Gastrocnemius medialis (tissue), 4 donors: ENCODE measurements at regions of chr14 and their contacts with region 1.

Region 1: GRCh38 chr14:75126679-75127473 is at the start of gene NEK9:
- DNase-seq: peak; percentile 86 to 90
- ATAC-seq: peak; percentile 95 to 98
- H3K4me3 ChIP-seq: peak within 1 kb of the TSS; percentile 78 to 96 (median 86)
- H3K27ac ChIP-seq: peak within 1 kb of the TSS; percentile 93 to 98 (median 96)
- H3K4me1 ChIP-seq: peaks cover 36 to 40% of the 10 kb centered on the region in 2 donors
- H3K27me3 ChIP-seq: no peaks in the 10 kb centered on the region
- CTCF ChIP-seq: no peak
- POLR2A ChIP-seq: peak; percentile 87 to 90
- total RNA-seq, gene NEK9: 36.3 to 93.2 (median 42.6) TPM

Region 2: GRCh38 chr14:75487155-75487671 is 360.3 kb after region 1 on chr14:
- in situ Hi-C with region 1: loop called in 3 of 4 experiments (anchors 10 to 25 kb)
- intact Hi-C with region 1: loop called (anchors 5 kb)
- DNase-seq: no peak
- ATAC-seq: no peak
- H3K4me3 ChIP-seq: no peak overlapping the region
- H3K27ac ChIP-seq: no peak overlapping the region
- H3K4me1 ChIP-seq: peaks cover 0 to 6% of the 10 kb centered on the region in 2 donors
- H3K27me3 ChIP-seq: no peaks in the 10 kb centered on the region
- CTCF ChIP-seq: no peak
- POLR2A ChIP-seq: no peak

Region 3: DNA sequence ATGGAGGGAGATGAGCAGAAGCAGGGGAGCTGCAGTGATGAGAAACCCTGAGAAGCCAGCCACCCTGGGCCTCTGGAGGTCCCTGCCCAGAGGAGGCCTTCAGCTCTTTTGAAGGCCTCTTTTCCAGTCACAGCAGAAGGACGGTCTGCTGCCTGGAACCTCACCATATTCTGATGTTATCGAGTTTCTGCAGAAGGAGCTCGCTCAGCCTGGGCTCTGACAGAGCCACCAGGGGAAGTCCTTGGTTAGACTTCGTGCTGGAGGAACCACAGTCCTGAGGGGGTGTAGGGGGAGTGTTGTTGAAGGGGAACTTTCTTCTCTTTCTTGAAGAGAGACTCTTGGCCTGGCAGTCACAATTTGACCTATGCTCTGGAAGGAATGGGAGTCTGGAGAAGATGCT is 370.3 kb after region 1 on chr14:
- in situ Hi-C with region 1: loop called in 2 of 4 experiments (anchors 10 to 25 kb)
- intact Hi-C with region 1: no loop called
- DNase-seq: no peak
- ATAC-seq: no peak
- H3K4me3 ChIP-seq: no peak overlapping the region
- H3K27ac ChIP-seq: no peak overlapping the region
- H3K4me1 ChIP-seq: peaks cover 0 to 3% of the 10 kb centered on the region in 2 donors
- H3K27me3 ChIP-seq: no peaks in the 10 kb centered on the region
- CTCF ChIP-seq: no peak
- POLR2A ChIP-seq: no peak